Gastrocnemius medialis (tissue), 4 donors: ENCODE measurements at regions of chr3 and their contacts with region 1.

Region 1: DNA sequence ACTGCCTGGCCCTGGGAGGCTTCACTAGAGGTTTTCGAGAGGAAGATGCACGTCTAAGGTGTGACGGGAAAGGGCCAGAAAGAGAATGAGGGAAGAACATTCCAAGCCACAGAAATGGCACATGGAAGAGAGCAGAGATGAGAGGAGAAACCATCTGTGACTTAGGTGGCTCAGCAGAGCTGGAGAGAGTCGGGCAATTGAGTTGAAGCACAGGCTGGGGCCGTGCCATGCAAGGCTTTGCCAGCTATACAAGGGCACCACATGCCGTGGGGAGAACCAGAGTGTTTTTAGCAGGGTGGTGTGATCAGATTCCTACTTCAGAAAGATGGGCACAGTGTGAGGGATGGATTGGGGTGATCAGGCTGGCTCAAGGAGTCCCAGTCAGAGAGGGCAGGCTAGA is 126.1 kb downstream of the VGLL4 start:
- DNase-seq: no peak
- ATAC-seq: no peak
- H3K4me3 ChIP-seq: no peak overlapping the region
- H3K27ac ChIP-seq: peak overlapping the region; percentile 30 to 70 (median 69)
- H3K4me1 ChIP-seq: peaks cover 15 to 20% of the 10 kb centered on the region in 2 donors
- H3K27me3 ChIP-seq: no peaks in the 10 kb centered on the region
- CTCF ChIP-seq: no peak
- POLR2A ChIP-seq: no peak

Region 2: DNA sequence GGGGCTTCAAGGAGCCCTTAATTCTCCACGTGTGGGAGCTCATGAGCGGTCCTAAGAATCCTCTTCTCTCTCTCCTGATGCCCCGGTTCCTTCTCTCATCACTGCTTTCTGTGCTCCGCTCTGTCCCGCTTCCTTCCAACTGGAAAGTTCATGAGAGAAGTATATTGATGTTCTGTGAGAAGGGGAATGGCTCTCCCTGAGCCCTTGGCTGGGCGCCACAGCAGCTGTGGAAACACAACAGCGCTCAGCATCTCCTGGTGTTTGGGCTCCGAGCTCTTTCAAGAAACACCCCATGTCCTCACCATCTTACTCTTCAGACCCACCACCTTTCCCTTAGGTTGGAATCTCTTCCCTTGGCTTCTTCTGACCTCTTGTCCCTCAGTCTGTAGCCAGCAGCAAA is 35.6 kb before region 1 on chr3:
- in situ Hi-C with region 1: no loop called
- intact Hi-C with region 1: loop called (anchors 5 kb)
- DNase-seq: peak; percentile 34 to 49
- ATAC-seq: no peak
- H3K4me3 ChIP-seq: no peak overlapping the region
- H3K27ac ChIP-seq: peak overlapping the region; percentile 61 to 82 (median 72)
- H3K4me1 ChIP-seq: peaks cover 30 to 47% of the 10 kb centered on the region in 2 donors
- H3K27me3 ChIP-seq: no peaks in the 10 kb centered on the region
- CTCF ChIP-seq: no peak
- POLR2A ChIP-seq: no peak